ENCODE measurements at regions of chr1 and their contacts with region 1.

Region 1: GRCh38 chr1:193183019-193183627 is 3.3 kb downstream of the B3GALT2 start:
- DNase-seq: no peak

Region 2: GRCh38 chr1:193054169-193054675 is 128.9 kb before region 1 on chr1:
- intact Hi-C with region 1: no loop called
- DNase-seq: no peak

Region 3: DNA sequence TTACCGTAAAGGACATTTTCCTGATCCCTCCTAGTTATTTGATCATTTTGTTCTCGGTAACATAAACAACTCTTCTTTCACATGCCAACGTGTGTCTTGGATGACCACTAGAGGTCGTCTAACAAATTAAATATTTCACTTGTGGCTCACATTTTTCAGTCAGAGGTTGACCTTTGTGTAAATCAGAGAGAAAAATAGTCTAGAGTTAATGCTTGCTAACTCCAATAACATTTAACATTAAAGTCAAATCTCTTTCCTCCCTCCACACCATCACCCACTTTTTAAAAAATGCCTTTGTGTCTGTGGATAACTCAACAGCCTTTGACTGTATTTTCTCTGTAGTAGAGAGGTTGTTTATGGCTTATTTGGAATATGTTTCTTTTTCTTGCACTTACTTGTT is 223.8 kb after region 1 on chr1:
- intact Hi-C with region 1: loop called (anchors 5 kb)
- DNase-seq: no peak

Region 4: GRCh38 chr1:193674292-193674944 is 491.3 kb after region 1 on chr1:
- intact Hi-C with region 1: loop called (anchors 10 kb)
- DNase-seq: no peak

Region 5: GRCh38 chr1:193951984-193952383 is 768.9 kb after region 1 on chr1:
- intact Hi-C with region 1: loop called (anchors 10 kb)
- DNase-seq: no peak

Region 6: DNA sequence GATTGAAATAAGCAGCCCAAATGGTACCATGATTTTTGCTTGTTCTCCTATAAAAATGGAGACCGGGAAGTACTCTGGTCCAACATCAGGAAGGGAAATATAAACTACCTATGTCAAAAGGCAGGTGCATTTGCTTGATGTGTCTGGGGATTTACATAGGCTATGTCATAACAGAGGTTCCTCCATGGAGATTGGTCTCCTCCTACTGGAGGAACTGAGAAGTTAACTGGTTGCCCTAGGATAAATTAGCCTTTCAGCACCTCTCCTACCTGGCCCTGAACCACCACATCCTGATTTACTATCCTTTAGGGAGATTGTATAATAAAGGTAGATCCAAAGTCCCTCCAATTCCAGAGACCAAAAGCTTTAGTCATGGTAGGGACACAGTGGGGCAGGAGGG is 1112.6 kb after region 1 on chr1:
- intact Hi-C with region 1: loop called (anchors 10 kb)
- DNase-seq: no peak